Activated CD8-positive, alpha-beta T cell treated with anti-CD3 and anti-CD28 coated beads, Interleukin-2, amount 10 ng/mL, durations not matched to agents 7 days and 5 days (primary cell): ENCODE measurements at regions of chr20 and their contacts with region 1.

Region 1: DNA sequence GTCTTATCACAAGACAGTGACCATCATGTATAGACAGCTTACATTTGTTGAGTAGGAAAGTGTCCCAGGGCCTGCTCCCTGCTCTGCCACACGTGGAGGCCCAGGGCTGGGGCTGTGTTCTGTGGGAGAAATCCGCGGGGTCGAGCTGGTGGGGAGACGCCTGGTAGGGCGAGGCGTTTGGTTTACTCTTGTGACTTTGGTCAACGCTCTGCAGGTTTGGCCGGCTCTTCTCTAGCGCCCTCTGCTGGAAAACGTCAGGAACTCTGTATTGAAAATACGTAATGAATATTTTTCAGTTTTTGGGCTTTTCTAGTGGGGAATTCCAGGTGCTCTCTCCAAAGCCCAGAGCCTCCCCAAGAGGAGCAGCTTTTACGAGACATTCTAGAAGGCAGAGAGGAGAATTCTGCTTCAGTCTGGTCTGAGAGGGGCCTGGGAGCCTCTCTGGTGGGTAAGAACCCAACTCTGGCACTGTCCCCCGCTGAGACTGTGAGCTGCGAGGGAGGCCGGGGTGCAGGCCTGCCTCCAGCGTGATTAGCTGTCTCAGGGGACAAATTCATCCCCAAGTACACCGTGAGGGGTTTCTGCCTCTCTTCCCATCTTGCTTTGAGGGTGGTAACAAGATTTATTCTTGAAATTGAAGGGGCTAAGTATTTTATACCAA is 112.6 kb upstream of the RALGAPA2 start:
- DNase-seq: peak; percentile 70
- ATAC-seq: peak; percentile 72
- H3K4me3 Mint-ChIP-seq: no peak overlapping the region
- H3K27ac Mint-ChIP-seq: no peak overlapping the region
- H3K4me1 Mint-ChIP-seq: no peaks in the 10 kb centered on the region
- H3K27me3 Mint-ChIP-seq: peaks cover 11% of the 10 kb centered on the region

Region 2: GRCh38 chr20:20664795-20665589 is 160.1 kb before region 1 on chr20:
- CTCF ChIA-PET with region 1: interaction called, 15 read pairs
- POLR2A ChIA-PET with region 1: no interaction called
- DNase-seq: no peak
- ATAC-seq: peak; percentile 87
- H3K4me3 Mint-ChIP-seq: no peak overlapping the region
- H3K27ac Mint-ChIP-seq: no peak overlapping the region
- H3K4me1 Mint-ChIP-seq: peaks cover 29% of the 10 kb centered on the region
- H3K27me3 Mint-ChIP-seq: no peaks in the 10 kb centered on the region

Region 3: DNA sequence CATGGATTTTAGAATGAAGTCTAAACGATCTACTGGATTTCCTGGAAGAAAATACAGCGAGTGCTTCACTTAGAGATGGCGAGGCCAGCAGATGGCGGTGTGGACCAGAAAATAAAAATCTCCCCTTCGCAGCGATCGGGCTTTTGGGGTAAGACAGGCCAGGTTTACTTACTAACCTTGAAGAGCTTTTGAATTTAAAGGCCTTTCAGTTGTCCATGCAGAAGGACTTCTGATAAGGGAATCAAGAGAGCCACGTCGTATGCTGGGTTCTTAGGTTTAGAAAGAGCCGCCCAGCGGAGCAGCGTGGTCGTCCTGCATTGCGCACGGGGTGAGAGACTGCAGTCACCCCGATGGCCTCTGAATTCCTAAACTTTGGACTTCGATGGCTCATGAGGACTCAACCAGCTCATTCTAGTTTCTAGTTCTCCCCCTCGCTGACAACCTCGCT is 12.5 kb after region 1 on chr20:
- CTCF ChIA-PET with region 1: interaction called, 11 read pairs
- POLR2A ChIA-PET with region 1: no interaction called
- DNase-seq: peak; percentile 58
- ATAC-seq: no peak
- H3K4me3 Mint-ChIP-seq: no peak overlapping the region
- H3K27ac Mint-ChIP-seq: no peak overlapping the region
- H3K4me1 Mint-ChIP-seq: no peaks in the 10 kb centered on the region
- H3K27me3 Mint-ChIP-seq: no peaks in the 10 kb centered on the region

Region 4: GRCh38 chr20:20872428-20872827 is 47.4 kb after region 1 on chr20:
- CTCF ChIA-PET with region 1: no interaction called
- POLR2A ChIA-PET with region 1: no interaction called
- DNase-seq: no peak
- ATAC-seq: no peak
- H3K4me3 Mint-ChIP-seq: no peak overlapping the region
- H3K27ac Mint-ChIP-seq: no peak overlapping the region
- H3K4me1 Mint-ChIP-seq: no peaks in the 10 kb centered on the region
- H3K27me3 Mint-ChIP-seq: peaks cover 9% of the 10 kb centered on the region

Region 5: DNA sequence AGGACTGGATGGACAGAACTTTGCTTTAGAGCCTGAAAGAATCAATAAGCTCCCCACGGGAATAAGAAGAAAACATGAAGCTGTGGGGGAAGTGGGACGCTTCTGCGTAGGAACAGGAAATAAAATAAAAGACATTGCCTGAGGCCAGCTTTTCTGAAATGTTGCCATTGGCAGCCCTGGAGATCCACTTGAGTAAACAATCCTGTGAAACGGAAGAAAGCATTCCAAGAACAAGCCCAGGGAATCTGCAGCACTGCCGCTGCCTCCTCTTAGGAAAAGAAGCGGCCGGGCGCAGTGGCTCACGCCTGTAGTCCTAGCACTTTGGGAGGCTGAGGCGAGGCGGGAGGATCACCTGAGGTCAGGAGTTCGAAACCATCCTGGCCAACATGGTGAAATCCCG is 69.7 kb after region 1 on chr20:
- CTCF ChIA-PET with region 1: no interaction called
- POLR2A ChIA-PET with region 1: no interaction called
- DNase-seq: no peak
- ATAC-seq: no peak
- H3K4me3 Mint-ChIP-seq: no peak overlapping the region
- H3K27ac Mint-ChIP-seq: no peak overlapping the region
- H3K4me1 Mint-ChIP-seq: no peaks in the 10 kb centered on the region
- H3K27me3 Mint-ChIP-seq: no peaks in the 10 kb centered on the region